ENCODE measurements at regions of chr1 and their contacts with region 1.

Region 1: DNA sequence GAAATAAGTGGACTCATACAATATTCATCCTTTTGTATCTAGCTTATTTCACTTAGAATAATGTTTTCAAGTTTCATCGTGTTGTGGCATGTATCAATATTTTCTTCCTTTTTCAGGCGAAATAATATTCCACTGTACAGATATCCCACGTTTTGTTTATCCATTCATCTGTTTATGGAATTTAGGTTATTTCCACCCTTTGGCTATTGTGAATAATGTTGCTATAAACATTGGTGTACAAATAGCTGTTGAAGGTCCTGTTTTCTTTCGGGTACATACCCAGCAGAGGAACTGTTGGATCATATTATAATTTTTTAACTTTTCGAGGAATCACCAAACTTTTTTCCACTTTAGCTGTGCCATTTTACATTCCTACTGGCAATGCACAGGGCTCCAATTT is 57.6 kb downstream of the C1orf198 start:
- DNase-seq: no peak
- ATAC-seq: no peak
- H3K4me3 ChIP-seq: no peak overlapping the region
- H3K27ac ChIP-seq: no peak overlapping the region
- H3K4me1 ChIP-seq: no peaks in the 10 kb centered on the region
- H3K27me3 ChIP-seq: no peaks in the 10 kb centered on the region
- CTCF ChIP-seq: no peak
- POLR2A ChIP-seq: no peak
- RAD21 ChIP-seq: no peak

Region 2: GRCh38 chr1:230681599-230681998 is 129.1 kb before region 1 on chr1:
- CTCF ChIA-PET with region 1: no interaction called
- POLR2A ChIA-PET with region 1: no interaction called
- dilution Hi-C with region 1: no loop called
- in situ Hi-C with region 1: no loop called
- intact Hi-C with region 1: no loop called
- DNase-seq: peak; percentile 85
- ATAC-seq: peak; percentile 71
- H3K4me3 ChIP-seq: no peak overlapping the region
- H3K27ac ChIP-seq: no peak overlapping the region
- H3K4me1 ChIP-seq: peaks cover 10% of the 10 kb centered on the region
- H3K27me3 ChIP-seq: no peaks in the 10 kb centered on the region
- CTCF ChIP-seq: no peak
- POLR2A ChIP-seq: no peak
- RAD21 ChIP-seq: no peak

Region 3: GRCh38 chr1:230849451-230850224 is 38.9 kb after region 1 on chr1:
- CTCF ChIA-PET with region 1: no interaction called
- POLR2A ChIA-PET with region 1: no interaction called
- dilution Hi-C with region 1: no loop called
- in situ Hi-C with region 1: no loop called
- intact Hi-C with region 1: loop called (anchors 1 kb)
- DNase-seq: peak; percentile 95
- ATAC-seq: peak; percentile 72
- H3K4me3 ChIP-seq: no peak overlapping the region
- H3K27ac ChIP-seq: peak overlapping the region; percentile 38; the same call in 1 of the 2 replicates
- H3K4me1 ChIP-seq: peaks cover 31% of the 10 kb centered on the region
- H3K27me3 ChIP-seq: no peaks in the 10 kb centered on the region
- CTCF ChIP-seq: no peak
- POLR2A ChIP-seq: no peak
- RAD21 ChIP-seq: 0 out of 2 replicates have a peak, but pooled peaks have one; percentile 4

Region 4: GRCh38 chr1:231295938-231296337 is 485.2 kb after region 1 on chr1:
- CTCF ChIA-PET with region 1: no interaction called
- POLR2A ChIA-PET with region 1: no interaction called
- dilution Hi-C with region 1: no loop called
- in situ Hi-C with region 1: no loop called
- intact Hi-C with region 1: no loop called
- DNase-seq: no peak
- ATAC-seq: no peak
- H3K4me3 ChIP-seq: no peak overlapping the region
- H3K27ac ChIP-seq: no peak overlapping the region
- H3K4me1 ChIP-seq: no peaks in the 10 kb centered on the region
- H3K27me3 ChIP-seq: no peaks in the 10 kb centered on the region
- CTCF ChIP-seq: no peak
- POLR2A ChIP-seq: no peak
- RAD21 ChIP-seq: no peak

Measured in IMR-90 (cell line).